ENCODE measurements at regions of chr1 and their contacts with region 1.

Region 1: DNA sequence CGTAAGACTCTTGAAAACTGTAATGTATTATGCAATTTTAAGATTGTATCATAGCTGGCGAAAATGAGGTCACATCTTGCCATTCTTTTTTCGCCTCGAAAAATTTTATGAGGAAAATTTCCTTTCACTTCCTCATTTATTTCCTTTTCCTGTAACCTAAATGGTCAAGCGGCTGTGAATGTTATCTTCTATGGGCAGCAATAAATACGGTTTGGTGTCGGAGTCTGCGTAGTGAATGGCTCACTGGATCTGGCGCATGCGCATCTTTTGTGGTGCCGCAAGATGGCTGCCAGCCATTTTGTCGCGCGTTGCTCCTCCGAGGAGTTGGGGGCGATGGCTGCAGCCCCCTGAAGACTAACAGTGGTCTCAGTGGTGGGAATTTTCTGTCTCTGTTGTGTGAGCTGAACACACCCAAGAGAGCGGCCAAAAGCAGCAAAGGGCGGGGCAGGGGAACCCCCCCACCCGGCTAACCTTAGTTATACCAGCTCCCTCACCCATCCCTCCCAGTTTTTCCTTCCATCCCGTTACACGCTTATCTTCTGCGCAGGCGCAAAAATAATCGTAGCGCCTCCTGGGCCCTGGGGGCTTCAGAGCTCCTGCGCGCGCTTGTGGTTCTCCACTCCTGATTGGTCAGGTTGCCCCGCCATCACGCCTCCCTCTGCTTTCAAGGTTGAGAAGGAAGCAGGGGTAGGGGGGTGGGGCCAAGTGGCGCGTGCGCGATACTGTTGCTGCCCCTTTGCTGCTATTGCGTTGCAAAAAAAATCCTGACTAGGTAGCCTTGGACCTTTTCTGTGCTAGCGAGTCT is at the start of gene RPRD2:
- DNase-seq: peak; percentile 99
- H3K4me3 Mint-ChIP-seq: peak within 1 kb of the TSS; percentile 99
- H3K27ac Mint-ChIP-seq: peak within 1 kb of the TSS; percentile 99
- H3K4me1 Mint-ChIP-seq: peaks cover 25% of the 10 kb centered on the region
- H3K27me3 Mint-ChIP-seq: no peaks in the 10 kb centered on the region
- total RNA-seq, gene RPRD2: 33.6 to 35.0 TPM

Region 2: GRCh38 chr1:150235852-150236613 is 127.6 kb before region 1 on chr1 and contains the start of gene ANP32E:
- CTCF ChIA-PET with region 1: interaction called, 5 read pairs
- POLR2A ChIA-PET with region 1: interaction called, 50 read pairs
- DNase-seq: peak; percentile 96
- H3K4me3 Mint-ChIP-seq: no peak within 1 kb of the TSS
- H3K27ac Mint-ChIP-seq: no peak within 1 kb of the TSS
- H3K4me1 Mint-ChIP-seq: peaks cover 22% of the 10 kb centered on the region
- H3K27me3 Mint-ChIP-seq: no peaks in the 10 kb centered on the region
- total RNA-seq, gene ANP32E: 185 TPM

Region 3: DNA sequence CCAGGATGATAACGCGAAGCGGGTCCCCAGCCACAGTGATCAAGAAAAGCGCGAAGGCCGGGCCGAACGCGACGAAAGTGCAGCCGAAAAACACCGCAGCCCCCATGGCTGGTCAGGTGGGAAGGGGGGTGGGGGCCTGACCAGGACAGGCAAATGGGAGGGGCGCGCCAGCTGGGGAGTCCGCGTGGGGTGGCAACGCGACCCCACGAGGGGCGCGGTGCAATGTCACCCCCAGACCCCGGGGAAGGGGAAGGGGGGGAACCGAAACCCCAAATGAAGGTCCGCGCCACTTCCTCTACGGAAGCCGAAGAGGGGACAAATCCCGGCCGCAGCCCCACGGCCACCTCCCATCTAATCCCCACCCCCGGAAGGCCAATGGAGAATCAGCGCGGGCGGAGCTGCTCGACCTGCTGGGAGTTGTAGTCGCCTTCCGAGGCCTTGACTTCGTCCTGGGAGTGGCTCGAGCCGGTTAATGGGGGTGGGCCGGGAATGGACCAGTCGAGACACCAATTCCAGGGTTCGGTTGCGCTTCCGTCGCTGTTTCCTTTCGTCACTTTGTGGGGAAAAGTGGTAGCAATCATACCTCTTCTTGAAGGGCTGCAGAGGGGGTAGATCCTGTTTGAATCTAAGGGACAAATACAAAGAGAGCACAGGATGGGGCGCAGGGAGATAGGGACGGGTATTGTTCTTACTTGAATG is 94.8 kb before region 1 on chr1 and contains the start of gene APH1A:
- CTCF ChIA-PET with region 1: no interaction called
- POLR2A ChIA-PET with region 1: interaction called, 15 read pairs
- DNase-seq: peak; percentile 95
- H3K4me3 Mint-ChIP-seq: peak within 1 kb of the TSS; percentile 91
- H3K27ac Mint-ChIP-seq: peak within 1 kb of the TSS; percentile 94
- H3K4me1 Mint-ChIP-seq: peaks cover 38% of the 10 kb centered on the region
- H3K27me3 Mint-ChIP-seq: no peaks in the 10 kb centered on the region
- total RNA-seq, gene APH1A: 142 to 144 TPM

Region 4: GRCh38 chr1:150321826-150322166 is 41.8 kb before region 1 on chr1:
- CTCF ChIA-PET with region 1: no interaction called
- POLR2A ChIA-PET with region 1: interaction called, 13 read pairs
- DNase-seq: no peak
- H3K4me3 Mint-ChIP-seq: peak overlapping the region; percentile 98
- H3K27ac Mint-ChIP-seq: peak overlapping the region; percentile 96
- H3K4me1 Mint-ChIP-seq: peaks cover 27% of the 10 kb centered on the region
- H3K27me3 Mint-ChIP-seq: no peaks in the 10 kb centered on the region

Region 5: GRCh38 chr1:150376110-150376509 is 12.5 kb after region 1 on chr1:
- CTCF ChIA-PET with region 1: no interaction called
- POLR2A ChIA-PET with region 1: interaction called, 22 read pairs
- DNase-seq: no peak
- H3K4me3 Mint-ChIP-seq: no peak overlapping the region
- H3K27ac Mint-ChIP-seq: no peak overlapping the region
- H3K4me1 Mint-ChIP-seq: peaks cover 23% of the 10 kb centered on the region
- H3K27me3 Mint-ChIP-seq: no peaks in the 10 kb centered on the region

Region 6: DNA sequence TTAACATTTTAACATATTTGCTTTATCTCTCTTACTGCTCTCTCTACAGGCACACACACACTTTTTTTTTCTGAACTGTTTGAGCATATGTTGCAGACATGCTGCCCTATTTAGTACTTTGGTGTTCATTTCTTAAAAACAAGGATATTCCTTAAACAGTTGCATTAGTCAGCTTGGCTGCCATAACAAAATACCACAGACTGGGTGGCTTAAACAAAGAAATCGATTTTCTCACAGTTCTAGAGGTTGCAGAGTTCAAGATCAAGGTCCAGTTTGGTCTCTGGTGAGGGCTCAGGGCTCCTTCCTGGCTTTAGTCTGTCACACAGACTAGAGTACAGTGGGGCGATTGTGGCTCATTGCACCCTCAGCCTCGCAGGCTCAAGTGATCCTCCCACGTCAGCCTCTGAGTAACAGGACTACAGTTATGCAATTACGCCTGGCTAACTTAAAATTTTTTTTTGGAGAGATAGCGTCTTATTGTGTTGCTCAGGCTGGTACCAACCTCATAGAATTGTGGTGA is 47.0 kb after region 1 on chr1:
- CTCF ChIA-PET with region 1: no interaction called
- POLR2A ChIA-PET with region 1: no interaction called
- DNase-seq: no peak
- H3K4me3 Mint-ChIP-seq: no peak overlapping the region
- H3K27ac Mint-ChIP-seq: no peak overlapping the region
- H3K4me1 Mint-ChIP-seq: peaks cover 21% of the 10 kb centered on the region
- H3K27me3 Mint-ChIP-seq: no peaks in the 10 kb centered on the region

Region 7: GRCh38 chr1:150486964-150487762 is 123.5 kb after region 1 on chr1 and contains the start of gene TARS2:
- CTCF ChIA-PET with region 1: no interaction called
- POLR2A ChIA-PET with region 1: interaction called, 10 read pairs
- DNase-seq: peak; percentile 96
- H3K4me3 Mint-ChIP-seq: peak within 1 kb of the TSS; percentile 83
- H3K27ac Mint-ChIP-seq: peak within 1 kb of the TSS; percentile 85
- H3K4me1 Mint-ChIP-seq: peaks cover 25% of the 10 kb centered on the region
- H3K27me3 Mint-ChIP-seq: no peaks in the 10 kb centered on the region
- total RNA-seq, gene TARS2: 37.2 to 38.8 TPM

Region 8: DNA sequence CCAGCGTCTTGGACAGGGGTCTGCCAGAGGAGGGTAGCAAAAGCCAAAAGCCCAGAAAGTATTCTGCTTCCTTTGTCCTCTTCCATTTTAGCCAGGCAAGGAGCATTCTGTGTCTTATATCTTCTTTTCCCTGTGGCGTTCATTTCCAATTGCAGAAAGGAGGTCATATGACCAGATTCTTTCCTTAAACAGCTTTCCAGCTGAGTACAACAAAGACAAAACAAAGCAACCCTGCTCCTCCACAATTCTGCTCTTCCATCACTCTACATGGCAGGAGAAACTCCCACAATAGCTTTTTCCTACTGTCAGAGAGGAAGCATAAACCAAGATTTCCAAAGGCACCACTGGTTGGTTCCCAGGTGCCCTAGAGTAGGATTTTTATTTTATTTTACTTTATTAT is 246.1 kb after region 1 on chr1:
- CTCF ChIA-PET with region 1: no interaction called
- POLR2A ChIA-PET with region 1: no interaction called
- DNase-seq: no peak
- H3K4me3 Mint-ChIP-seq: no peak overlapping the region
- H3K27ac Mint-ChIP-seq: peak overlapping the region; percentile 12
- H3K4me1 Mint-ChIP-seq: peaks cover 51% of the 10 kb centered on the region
- H3K27me3 Mint-ChIP-seq: no peaks in the 10 kb centered on the region

Region 9: DNA sequence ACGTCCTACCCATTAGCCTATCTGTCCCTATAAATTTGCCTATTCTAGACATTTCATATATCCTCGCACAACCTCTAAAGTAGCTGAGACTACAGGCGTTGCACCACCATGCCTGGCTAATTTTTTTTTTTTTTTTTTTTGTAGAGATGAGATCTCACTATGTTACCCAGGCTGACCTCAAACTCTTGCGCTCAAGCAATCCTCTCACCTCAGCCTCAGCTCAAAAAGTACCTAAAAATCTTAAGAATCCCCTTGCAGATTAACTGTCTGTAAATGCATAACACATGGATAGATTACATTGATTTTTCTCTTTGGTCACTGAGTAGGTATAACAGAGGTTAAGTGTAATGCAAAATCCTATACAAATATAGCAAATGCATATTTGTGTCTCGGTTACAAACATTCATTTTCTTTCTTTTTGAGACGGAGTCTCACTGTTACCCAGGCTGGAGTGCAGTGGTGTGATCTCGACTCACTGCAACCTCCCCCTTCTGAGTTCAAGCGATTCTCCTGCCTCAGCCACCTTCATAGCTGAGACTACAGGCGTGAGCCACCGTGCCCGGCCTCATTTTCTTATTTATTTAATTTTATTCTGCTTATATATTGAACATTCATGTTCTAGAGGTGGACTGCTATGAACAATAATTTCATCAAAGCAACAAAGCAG is 354.7 kb after region 1 on chr1:
- CTCF ChIA-PET with region 1: no interaction called
- POLR2A ChIA-PET with region 1: no interaction called
- DNase-seq: no peak
- H3K4me3 Mint-ChIP-seq: no peak overlapping the region
- H3K27ac Mint-ChIP-seq: no peak overlapping the region
- H3K4me1 Mint-ChIP-seq: no peaks in the 10 kb centered on the region
- H3K27me3 Mint-ChIP-seq: peaks cover 2% of the 10 kb centered on the region

Measured in activated CD4-positive, alpha-beta memory T cell treated with anti-CD3 and anti-CD28 coated beads, Interleukin-2, amount 10 ng/mL, durations not matched to agents 7 days and 5 days (primary cell).